ENCODE measurements at regions of chr14 and their contacts with region 1.

Region 1: DNA sequence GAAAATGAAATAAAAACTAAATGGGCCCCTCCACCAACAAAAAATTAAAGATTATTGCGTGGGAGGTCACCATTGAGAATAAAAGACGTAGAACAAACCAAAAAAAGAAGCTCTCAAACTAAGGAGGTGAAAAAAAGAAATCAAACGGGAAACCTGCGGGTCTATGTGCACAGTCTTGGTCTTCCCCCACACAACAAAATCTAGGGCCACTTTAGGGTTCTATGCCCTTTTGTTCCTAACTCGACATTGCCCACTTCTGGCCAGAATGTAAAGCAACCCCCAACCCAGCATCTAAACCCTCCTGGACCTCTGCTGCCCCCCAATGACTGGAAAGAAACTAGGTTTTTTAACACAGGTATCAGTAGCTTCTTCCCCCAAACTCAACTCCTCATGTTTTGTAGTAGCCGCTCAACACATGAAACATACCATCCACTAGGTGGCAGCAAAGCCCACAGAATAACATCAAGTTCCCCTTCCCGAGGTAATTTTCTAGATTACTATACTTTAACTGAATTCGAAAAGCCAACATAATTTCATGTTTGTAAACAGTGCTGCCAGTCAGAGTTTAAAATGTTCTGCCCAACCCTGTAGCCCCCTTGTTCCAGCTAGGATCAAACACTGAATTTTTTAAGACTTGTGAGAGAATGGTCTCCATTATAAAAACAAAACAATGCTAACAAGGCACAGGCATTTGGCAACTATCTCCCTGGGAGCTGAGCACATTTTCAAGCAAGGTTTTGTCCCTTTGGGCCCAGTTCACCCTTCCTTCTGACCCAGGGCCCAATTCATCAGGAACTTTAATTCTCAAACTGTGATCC is 18.7 kb downstream of the DAD1 start:
- DNase-seq: peak in 8 of 9 donors; percentile 72 to 98 (median 96)
- ATAC-seq: peak; percentile 98
- H3K4me3 ChIP-seq: peak overlapping the region; percentile 53
- H3K4me3 Mint-ChIP-seq: peak overlapping the region; percentile 68 to 95 (median 80)
- H3K27ac ChIP-seq: peak overlapping the region; percentile 87
- H3K27ac Mint-ChIP-seq: peak overlapping the region; percentile 77 to 99 (median 96)
- H3K4me1 ChIP-seq: peaks cover 49 to 51% of the 10 kb centered on the region in 2 donors
- H3K4me1 Mint-ChIP-seq: peaks cover 28 to 72% (median 68%) of the 10 kb centered on the region in 7 donors
- H3K27me3 ChIP-seq: no peaks in the 10 kb centered on the region
- H3K27me3 Mint-ChIP-seq: no peaks in the 10 kb centered on the region

Region 2: GRCh38 chr14:21860172-21860571 is 710.2 kb before region 1 on chr14:
- CTCF ChIA-PET with region 1: interaction called, 12 read pairs
- POLR2A ChIA-PET with region 1: interaction called, 6 read pairs
- intact Hi-C with region 1: loop called in 1 of 2 experiments (anchors 1 kb)
- DNase-seq: peak in 7 of 9 donors; percentile 32 to 56 (median 47)
- ATAC-seq: peak; percentile 68
- H3K4me3 ChIP-seq: no peak overlapping the region
- H3K4me3 Mint-ChIP-seq: peak overlapping the region; percentile 40 to 89 (median 72)
- H3K27ac ChIP-seq: peak overlapping the region; percentile 7
- H3K27ac Mint-ChIP-seq: peak overlapping the region in 8 of 9 donors; percentile 7 to 77 (median 29)
- H3K4me1 ChIP-seq: no peaks in the 10 kb centered on the region
- H3K4me1 Mint-ChIP-seq: peaks cover 3 to 19% (median 11%) of the 10 kb centered on the region in 7 donors
- H3K27me3 ChIP-seq: no peaks in the 10 kb centered on the region
- H3K27me3 Mint-ChIP-seq: peaks cover 0 to 29% (median 4%) of the 10 kb centered on the region in 5 donors

Region 3: GRCh38 chr14:21997300-21997699 is 573.0 kb before region 1 on chr14:
- CTCF ChIA-PET with region 1: interaction called, 8 read pairs
- POLR2A ChIA-PET with region 1: interaction called, 4 read pairs
- intact Hi-C with region 1: loop called in 1 of 2 experiments (anchors 1 kb)
- DNase-seq: peak in 6 of 9 donors; percentile 39 to 65 (median 58)
- ATAC-seq: peak; percentile 91
- H3K4me3 ChIP-seq: peak overlapping the region; percentile 51
- H3K4me3 Mint-ChIP-seq: peak overlapping the region; percentile 85 to 96 (median 90)
- H3K27ac ChIP-seq: peak overlapping the region; percentile 54
- H3K27ac Mint-ChIP-seq: peak overlapping the region; percentile 72 to 95 (median 89)
- H3K4me1 ChIP-seq: peaks cover under 1 to 2% of the 10 kb centered on the region in 2 donors
- H3K4me1 Mint-ChIP-seq: peaks cover 1 to 35% (median 19%) of the 10 kb centered on the region in 7 donors
- H3K27me3 ChIP-seq: no peaks in the 10 kb centered on the region
- H3K27me3 Mint-ChIP-seq: peaks cover 0 to 5% (median 0%) of the 10 kb centered on the region in 5 donors

Region 4: DNA sequence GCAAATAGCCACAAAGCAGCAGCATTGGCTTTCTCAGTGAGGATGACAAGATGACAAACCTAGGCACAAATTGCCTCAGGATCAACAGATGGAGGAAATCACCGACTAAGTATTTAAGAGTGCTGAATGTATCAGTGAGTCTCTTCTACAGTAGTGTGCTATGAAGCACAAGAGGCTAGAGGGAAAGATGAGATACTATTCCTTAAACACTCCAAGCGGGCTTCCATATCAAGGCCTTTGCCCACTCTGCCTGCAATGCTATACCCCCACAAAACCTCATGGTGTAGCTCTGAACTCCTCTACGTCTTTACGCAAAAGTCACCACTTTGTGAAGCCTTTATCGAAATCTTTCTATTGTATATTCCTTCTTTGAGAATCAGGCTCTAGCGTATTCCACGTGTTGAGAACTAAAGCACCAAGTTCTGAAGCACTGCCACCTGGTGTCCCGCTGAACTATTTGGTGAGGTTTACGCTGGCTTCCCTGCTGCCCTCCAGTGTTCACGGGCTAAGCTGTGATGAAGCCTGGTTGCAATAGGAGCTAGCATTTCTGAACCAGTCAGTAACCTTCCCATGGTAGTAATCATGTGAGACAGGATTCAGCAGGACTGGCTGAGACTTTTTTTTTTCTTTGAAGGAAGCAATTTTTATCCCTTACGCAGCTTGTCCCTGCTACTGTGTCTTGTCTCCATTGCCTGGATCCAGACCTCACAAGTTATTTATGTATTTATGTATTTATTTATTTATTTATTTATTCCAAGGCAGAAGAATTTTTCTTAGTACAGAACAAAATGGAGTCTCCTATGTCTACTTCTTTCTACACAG is 470.2 kb before region 1 on chr14:
- CTCF ChIA-PET with region 1: no interaction called
- POLR2A ChIA-PET with region 1: no interaction called
- intact Hi-C with region 1: no loop called
- DNase-seq: peak in 8 of 9 donors; percentile 31 to 74 (median 56)
- ATAC-seq: peak; percentile 83
- H3K4me3 ChIP-seq: no peak overlapping the region
- H3K4me3 Mint-ChIP-seq: peak overlapping the region in 3 of 10 donors; percentile 47 to 53 (median 48)
- H3K27ac ChIP-seq: no peak overlapping the region
- H3K27ac Mint-ChIP-seq: peak overlapping the region in 2 of 9 donors; percentile 25 to 49
- H3K4me1 ChIP-seq: peaks cover 3 to 29% of the 10 kb centered on the region in 2 donors
- H3K4me1 Mint-ChIP-seq: peaks cover 1 to 62% (median 48%) of the 10 kb centered on the region in 7 donors
- H3K27me3 ChIP-seq: no peaks in the 10 kb centered on the region
- H3K27me3 Mint-ChIP-seq: no peaks in the 10 kb centered on the region

Region 5: GRCh38 chr14:22221508-22221907 is 348.8 kb before region 1 on chr14:
- CTCF ChIA-PET with region 1: interaction called, 6 read pairs
- POLR2A ChIA-PET with region 1: no interaction called
- intact Hi-C with region 1: loop called (anchors 1 to 2 kb)
- DNase-seq: peak in 5 of 9 donors; percentile 5 to 29 (median 20)
- ATAC-seq: no peak
- H3K4me3 ChIP-seq: no peak overlapping the region
- H3K4me3 Mint-ChIP-seq: peak overlapping the region; percentile 25 to 73 (median 52)
- H3K27ac ChIP-seq: no peak overlapping the region
- H3K27ac Mint-ChIP-seq: peak overlapping the region in 6 of 9 donors; percentile 4 to 72 (median 52)
- H3K4me1 ChIP-seq: no peaks in the 10 kb centered on the region
- H3K4me1 Mint-ChIP-seq: peaks cover 0 to 13% (median 7%) of the 10 kb centered on the region in 7 donors
- H3K27me3 ChIP-seq: no peaks in the 10 kb centered on the region
- H3K27me3 Mint-ChIP-seq: no peaks in the 10 kb centered on the region

Region 6: GRCh38 chr14:22589096-22589839 is 18.9 kb after region 1 on chr14 and contains the start of gene DAD1:
- CTCF ChIA-PET with region 1: interaction called, 52 read pairs
- POLR2A ChIA-PET with region 1: interaction called, 82 read pairs
- intact Hi-C with region 1: loop called (anchors 1 kb)
- DNase-seq: peak; percentile 100
- ATAC-seq: peak; percentile 94
- H3K4me3 ChIP-seq: peak within 1 kb of the TSS; percentile 81
- H3K4me3 Mint-ChIP-seq: peak within 1 kb of the TSS; percentile 83 to 99 (median 96)
- H3K27ac ChIP-seq: peak within 1 kb of the TSS; percentile 96
- H3K27ac Mint-ChIP-seq: peak within 1 kb of the TSS; percentile 90 to 100 (median 99)
- H3K4me1 ChIP-seq: peaks cover 30 to 38% of the 10 kb centered on the region in 2 donors
- H3K4me1 Mint-ChIP-seq: peaks cover 34 to 62% (median 53%) of the 10 kb centered on the region in 7 donors
- H3K27me3 ChIP-seq: no peaks in the 10 kb centered on the region
- H3K27me3 Mint-ChIP-seq: peaks cover 0 to 17% (median 0%) of the 10 kb centered on the region in 5 donors
- total RNA-seq, gene DAD1: 68.8 to 157 (median 117) TPM

Region 7: GRCh38 chr14:22623047-22623446 is 52.7 kb after region 1 on chr14:
- CTCF ChIA-PET with region 1: no interaction called
- POLR2A ChIA-PET with region 1: no interaction called
- intact Hi-C with region 1: no loop called
- DNase-seq: no peak
- ATAC-seq: no peak
- H3K4me3 ChIP-seq: no peak overlapping the region
- H3K4me3 Mint-ChIP-seq: no peak overlapping the region
- H3K27ac ChIP-seq: no peak overlapping the region
- H3K27ac Mint-ChIP-seq: peak overlapping the region in 1 of 9 donors; percentile 70
- H3K4me1 ChIP-seq: no peaks in the 10 kb centered on the region
- H3K4me1 Mint-ChIP-seq: peaks cover 0 to 7% (median 3%) of the 10 kb centered on the region in 7 donors
- H3K27me3 ChIP-seq: no peaks in the 10 kb centered on the region
- H3K27me3 Mint-ChIP-seq: peaks cover 0 to 18% (median 3%) of the 10 kb centered on the region in 5 donors

Region 8: DNA sequence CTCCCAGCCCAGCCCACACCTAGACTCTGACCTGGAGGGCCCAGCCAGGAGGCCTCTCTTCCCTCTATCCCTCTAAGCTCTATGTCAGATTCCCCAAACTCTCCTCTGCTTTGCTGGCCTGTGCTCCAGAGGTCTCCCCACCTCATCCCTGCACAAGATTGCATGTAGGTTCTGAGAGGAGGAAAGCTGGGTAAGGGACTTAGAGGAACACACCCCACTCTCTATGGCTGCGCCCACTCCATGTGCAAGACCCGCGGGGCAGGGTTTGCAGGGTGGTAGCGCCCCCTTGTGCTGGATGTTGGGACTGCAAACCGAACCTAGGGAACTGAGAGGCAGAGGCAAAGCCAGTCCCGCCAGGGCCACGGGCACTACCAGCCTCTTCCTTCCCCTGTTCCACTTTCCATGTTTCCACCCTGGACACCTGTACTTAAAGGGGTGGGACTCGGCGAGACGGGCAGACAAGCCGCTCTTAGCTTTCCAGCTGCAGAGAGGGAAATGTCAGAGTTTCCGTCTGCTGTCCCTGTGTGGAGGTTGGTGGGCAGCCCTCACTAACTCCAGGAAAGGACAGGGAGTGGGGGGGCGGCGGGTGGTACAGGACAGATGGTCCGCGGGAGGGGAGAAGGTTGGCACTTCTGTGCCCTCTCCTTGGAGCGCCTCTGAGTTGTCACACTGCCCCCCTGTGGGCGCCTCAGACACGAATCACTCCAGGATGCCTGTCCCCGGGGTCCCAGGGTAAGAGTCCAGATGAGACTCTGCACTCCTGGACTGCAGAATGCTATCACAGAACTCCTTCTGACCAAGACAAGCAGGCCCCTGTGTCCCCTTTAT is 282.8 kb after region 1 on chr14:
- CTCF ChIA-PET with region 1: interaction called, 18 read pairs
- POLR2A ChIA-PET with region 1: interaction called, 6 read pairs
- intact Hi-C with region 1: loop called (anchors 1 kb)
- DNase-seq: peak; percentile 75 to 94 (median 87)
- ATAC-seq: peak; percentile 96
- H3K4me3 ChIP-seq: peak overlapping the region; percentile 74
- H3K4me3 Mint-ChIP-seq: peak overlapping the region; percentile 81 to 89 (median 86)
- H3K27ac ChIP-seq: peak overlapping the region; percentile 72
- H3K27ac Mint-ChIP-seq: peak overlapping the region in 7 of 9 donors; percentile 71 to 85 (median 81)
- H3K4me1 ChIP-seq: peaks cover 3% of the 10 kb centered on the region in 2 donors
- H3K4me1 Mint-ChIP-seq: peaks cover 8 to 30% (median 21%) of the 10 kb centered on the region in 7 donors
- H3K27me3 ChIP-seq: no peaks in the 10 kb centered on the region
- H3K27me3 Mint-ChIP-seq: peaks cover 0 to 19% (median 6%) of the 10 kb centered on the region in 5 donors

Measured in naive thymus-derived CD4-positive, alpha-beta T cell (primary cell).